Lower leg skin (tissue), 4 donors: ENCODE measurements at regions of chr10 and their contacts with region 1.

Region 1: GRCh38 chr10:11757821-11758463 is 15.8 kb downstream of the ECHDC3 start:
- DNase-seq: peak; percentile 93 to 98
- H3K4me3 ChIP-seq: no peak overlapping the region
- CTCF ChIP-seq: peak in 1 of 3 donors; percentile 87
- POLR2A ChIP-seq: no peak

Region 2: GRCh38 chr10:11515596-11516430 is 242.1 kb before region 1 on chr10:
- intact Hi-C with region 1: loop called (anchors 10 kb)
- DNase-seq: peak in 1 of 2 donors; percentile 47
- H3K4me3 ChIP-seq: no peak overlapping the region
- CTCF ChIP-seq: peak in 1 of 3 donors; percentile 57
- POLR2A ChIP-seq: no peak

Region 3: DNA sequence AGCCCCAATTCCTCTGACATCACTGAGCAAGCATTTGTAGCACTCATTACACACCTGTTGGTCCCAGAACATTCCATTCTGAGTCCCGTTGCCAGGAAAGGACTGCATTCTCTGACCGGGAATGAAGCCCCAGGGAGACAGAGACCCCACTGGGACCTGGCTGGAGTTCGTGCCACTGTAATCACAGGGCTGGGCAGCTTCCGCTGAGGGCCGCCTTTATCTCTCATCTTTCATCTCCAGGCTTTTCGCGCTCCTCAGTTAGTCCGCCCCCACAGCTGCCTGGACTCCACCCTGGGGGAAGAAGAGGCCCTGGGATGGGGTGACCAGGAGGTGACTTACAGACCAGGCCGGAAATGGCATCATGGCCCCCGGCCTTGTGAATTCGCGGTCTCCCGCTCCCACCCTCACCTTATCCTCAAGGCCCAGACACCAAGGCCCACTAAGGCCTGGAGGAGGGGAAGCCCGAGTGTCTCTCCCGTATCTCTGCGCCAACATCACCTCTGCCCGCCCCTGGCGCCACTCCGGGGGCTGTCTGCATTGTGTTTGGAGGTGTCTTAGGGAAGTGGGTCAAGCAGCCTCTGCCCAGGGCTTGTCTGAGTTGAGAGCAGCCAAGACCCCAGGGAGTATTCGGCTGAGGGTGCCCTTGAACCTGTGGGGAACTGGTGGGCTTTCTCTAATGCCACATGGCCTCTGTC is 140.6 kb after region 1 on chr10:
- intact Hi-C with region 1: no loop called
- DNase-seq: no peak
- H3K4me3 ChIP-seq: no peak overlapping the region
- CTCF ChIP-seq: no peak
- POLR2A ChIP-seq: no peak

Region 4: GRCh38 chr10:11986593-11987216 is 228.8 kb after region 1 on chr10:
- intact Hi-C with region 1: no loop called
- DNase-seq: peak; percentile 63 to 91
- H3K4me3 ChIP-seq: no peak overlapping the region
- CTCF ChIP-seq: no peak
- POLR2A ChIP-seq: no peak